WTC11 (cell line): ENCODE measurements at regions of chr22 and their contacts with region 1.

Region 1: GRCh38 chr22:41762980-41763779 is 37.3 kb upstream of the CCDC134 start:
- DNase-seq: peak; percentile 91
- ATAC-seq: peak; percentile 98
- H3K4me3 Mint-ChIP-seq: no peak overlapping the region
- H3K27ac Mint-ChIP-seq: no peak overlapping the region
- H3K4me1 Mint-ChIP-seq: no peaks in the 10 kb centered on the region
- H3K27me3 Mint-ChIP-seq: no peaks in the 10 kb centered on the region; the same call in none of the 2 replicates
- CTCF ChIP-seq: peak; percentile 69

Region 2: GRCh38 chr22:41752011-41752970 is 10.9 kb before region 1 on chr22:
- CTCF ChIA-PET with region 1: interaction called, 50 read pairs
- POLR2A ChIA-PET with region 1: no interaction called
- DNase-seq: no peak
- ATAC-seq: no peak
- H3K4me3 Mint-ChIP-seq: no peak overlapping the region
- H3K27ac Mint-ChIP-seq: no peak overlapping the region
- H3K4me1 Mint-ChIP-seq: peaks cover 14% of the 10 kb centered on the region
- H3K27me3 Mint-ChIP-seq: no peaks in the 10 kb centered on the region; the same call in 1 of the 2 replicates
- CTCF ChIP-seq: no peak

Region 3: DNA sequence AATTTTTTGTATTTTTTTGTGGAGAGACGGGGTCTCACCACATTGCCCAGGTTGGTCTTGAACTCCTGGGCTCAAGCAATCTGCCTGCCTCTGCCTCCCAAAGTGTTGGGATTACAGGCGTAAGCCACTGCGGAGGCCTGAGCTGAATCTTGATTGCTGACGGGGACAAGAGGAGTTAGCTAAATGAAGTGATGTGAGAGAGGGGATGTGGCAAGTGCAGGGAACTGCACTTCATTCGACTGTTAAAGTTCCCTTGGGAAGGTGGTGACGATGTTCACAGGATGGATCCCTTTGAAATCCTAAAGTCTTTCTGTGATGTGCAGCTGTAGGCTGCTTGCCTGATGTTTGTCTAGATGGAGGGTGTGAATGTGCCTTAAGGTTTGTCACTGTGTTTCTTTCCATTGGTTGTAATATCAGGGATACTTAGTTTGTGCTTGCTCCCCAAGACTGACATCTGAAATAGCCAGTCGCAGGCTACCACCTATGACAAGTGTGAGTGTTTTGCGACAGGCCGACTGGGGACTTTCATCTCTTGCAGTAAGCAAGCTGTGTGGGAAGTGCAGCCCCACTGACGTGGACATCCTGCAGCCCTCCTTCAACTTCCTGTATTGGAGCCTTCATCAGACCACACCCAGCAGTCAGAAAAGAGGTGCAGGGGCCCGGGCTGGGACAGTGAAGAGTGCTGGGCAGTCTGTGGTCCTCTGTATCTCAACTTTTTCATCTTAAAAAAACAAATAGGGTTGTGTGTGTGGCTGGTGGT is 17.7 kb after region 1 on chr22:
- CTCF ChIA-PET with region 1: interaction called, 36 read pairs
- POLR2A ChIA-PET with region 1: no interaction called
- DNase-seq: no peak
- ATAC-seq: peak; percentile 41
- H3K4me3 Mint-ChIP-seq: no peak overlapping the region
- H3K27ac Mint-ChIP-seq: no peak overlapping the region
- H3K4me1 Mint-ChIP-seq: peaks cover 8% of the 10 kb centered on the region
- H3K27me3 Mint-ChIP-seq: peaks cover 7% of the 10 kb centered on the region; the same call in 1 of the 2 replicates
- CTCF ChIP-seq: no peak

Region 4: DNA sequence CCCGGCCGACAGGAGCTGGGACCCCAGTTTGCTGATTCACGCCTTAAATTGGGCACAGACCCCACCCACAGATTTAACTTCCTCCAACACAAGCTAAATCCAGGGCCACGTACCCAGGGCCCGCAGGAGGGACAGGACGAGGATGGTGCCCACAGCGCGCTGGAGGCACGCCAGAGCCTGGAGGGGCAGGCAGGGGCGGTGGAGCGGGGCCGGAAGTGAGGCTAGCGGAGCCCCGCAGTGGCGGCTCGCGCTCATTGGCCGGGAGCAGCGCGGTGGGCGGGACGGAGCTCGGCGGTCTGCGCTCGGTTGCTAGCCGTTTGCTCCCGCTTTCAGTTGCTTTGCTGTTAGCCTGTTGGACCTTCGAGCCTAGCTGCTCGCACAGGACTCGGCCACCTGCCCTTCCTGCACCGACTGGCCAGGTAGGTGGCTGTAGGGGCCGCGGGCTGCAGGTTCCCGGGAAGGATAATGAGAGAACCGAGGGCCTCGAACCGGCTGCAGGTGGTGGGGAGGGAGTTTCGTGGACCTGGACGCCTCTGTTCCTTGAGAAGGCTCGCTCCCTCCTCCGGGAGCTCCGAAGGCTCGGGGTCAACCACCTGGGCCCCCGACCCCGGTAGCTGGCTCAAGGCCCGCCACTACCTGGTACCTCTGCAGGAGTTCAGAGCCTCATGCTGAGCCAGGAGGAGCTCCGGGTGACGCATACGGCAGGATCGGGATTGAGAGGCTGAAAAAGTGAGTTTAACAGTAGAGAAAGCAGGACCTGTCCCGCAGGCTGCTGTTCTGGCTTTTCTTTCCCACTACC is 37.4 kb after region 1 on chr22 and contains the start of gene CCDC134:
- CTCF ChIA-PET with region 1: interaction called, 21 read pairs
- POLR2A ChIA-PET with region 1: interaction called, 5 read pairs
- DNase-seq: peak; percentile 91
- ATAC-seq: peak; percentile 95
- H3K4me3 Mint-ChIP-seq: peak within 1 kb of the TSS; percentile 96
- H3K27ac Mint-ChIP-seq: peak within 1 kb of the TSS; percentile 98
- H3K4me1 Mint-ChIP-seq: peaks cover 30% of the 10 kb centered on the region
- H3K27me3 Mint-ChIP-seq: no peaks in the 10 kb centered on the region
- CTCF ChIP-seq: no peak
- total RNA-seq, gene CCDC134: 19.0 to 21.3 TPM (median 19.2 TPM) in 3 replicates